GM18951 (cell line): ENCODE measurements at regions of chr18 and their contacts with region 1.

Region 1: DNA sequence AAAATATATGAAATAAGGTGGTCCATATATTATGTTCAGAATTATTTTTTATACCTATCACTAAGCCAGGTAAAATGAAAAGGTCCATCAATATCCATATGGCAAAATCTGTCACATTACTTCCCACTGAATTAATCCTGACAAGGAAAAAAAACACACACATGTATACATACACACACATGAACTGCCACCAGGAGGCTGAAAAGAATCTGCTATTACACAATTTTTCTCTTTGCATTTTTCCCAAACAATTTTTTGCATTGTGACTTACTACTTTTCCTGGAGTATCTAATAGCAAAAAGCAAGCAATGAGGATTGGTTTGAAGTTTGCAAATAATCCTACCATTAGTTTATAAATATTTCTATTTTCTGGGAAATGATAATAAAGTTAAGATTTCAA is 128.2 kb upstream of the CD226 start:
- POLR2A ChIP-seq: no peak

Region 2: DNA sequence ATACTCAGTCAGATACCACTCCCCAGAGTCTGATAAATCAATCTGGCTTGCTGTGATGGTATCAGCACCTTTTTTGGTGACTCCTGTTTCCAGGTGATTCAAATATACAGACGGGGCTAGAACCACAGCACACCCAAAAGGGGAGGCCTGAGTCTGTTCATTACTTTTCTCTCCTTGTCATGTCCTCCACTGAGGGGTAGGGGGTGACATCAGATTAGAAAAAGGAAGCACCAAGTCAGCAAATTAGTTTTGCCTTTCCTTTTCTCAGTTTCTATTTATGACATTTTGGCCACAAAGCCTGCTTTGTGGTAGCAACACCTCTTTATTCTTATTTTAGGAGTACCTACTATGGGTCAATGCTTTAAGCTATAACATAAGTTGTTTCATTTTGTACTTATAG is 1150.6 kb before region 1 on chr18:
- in situ Hi-C with region 1: loop called (anchors 25 kb)
- POLR2A ChIP-seq: no peak

Region 3: GRCh38 chr18:69636529-69637301 is 439.2 kb before region 1 on chr18:
- in situ Hi-C with region 1: loop called (anchors 25 kb)
- POLR2A ChIP-seq: no peak